ENCODE measurements at regions of chr1 and their contacts with region 1.

Region 1: DNA sequence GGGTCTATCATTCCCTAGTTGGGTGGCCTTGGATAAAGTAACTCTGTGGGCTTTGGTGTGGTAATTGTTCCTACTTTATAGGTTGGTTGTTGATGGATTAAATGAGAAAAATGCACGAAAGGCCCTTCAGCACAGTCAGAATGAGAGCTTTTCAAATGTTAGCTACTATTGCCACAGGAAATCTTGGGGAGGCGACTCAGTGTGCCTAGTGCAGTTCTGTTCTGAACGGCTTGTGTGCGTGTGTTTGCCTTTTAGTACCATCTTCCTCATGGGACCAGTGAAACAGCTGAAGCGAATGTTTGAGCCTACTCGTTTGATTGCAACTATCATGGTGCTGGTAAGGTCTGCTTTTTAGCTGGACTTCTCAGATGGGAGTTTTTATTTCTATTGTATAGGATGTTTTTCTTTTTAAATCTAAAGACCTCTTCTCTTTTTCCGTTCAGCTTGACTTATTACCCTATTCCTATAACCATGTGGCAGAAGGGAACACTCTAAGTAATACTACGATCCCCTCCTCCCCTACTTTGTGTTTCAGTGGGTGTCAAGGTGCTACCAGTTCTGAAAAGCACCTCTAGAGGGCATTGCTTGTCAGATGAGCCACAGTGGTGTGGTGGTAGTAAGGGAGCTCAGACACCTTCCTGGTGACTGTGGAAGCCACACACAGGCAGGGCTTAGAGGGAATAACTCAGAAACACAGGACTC is 9.2 kb downstream of the SFT2D2 start:
- H3K4me3 ChIP-seq: no peak overlapping the region
- H3K27ac ChIP-seq: no peak overlapping the region
- H3K4me1 ChIP-seq: no peaks in the 10 kb centered on the region
- CTCF ChIP-seq: peak; percentile 42; the same call in 1 of the 2 replicates

Region 2: GRCh38 chr1:168121401-168122011 is 113.5 kb before region 1 on chr1:
- CTCF ChIA-PET with region 1: no interaction called
- POLR2A ChIA-PET with region 1: no interaction called
- H3K4me3 ChIP-seq: no peak overlapping the region
- H3K27ac ChIP-seq: no peak overlapping the region
- H3K4me1 ChIP-seq: no peaks in the 10 kb centered on the region
- CTCF ChIP-seq: no peak

Region 3: GRCh38 chr1:168256164-168256563 is 21.2 kb after region 1 on chr1:
- CTCF ChIA-PET with region 1: interaction called, 23 read pairs
- POLR2A ChIA-PET with region 1: no interaction called
- H3K4me3 ChIP-seq: no peak overlapping the region
- H3K27ac ChIP-seq: no peak overlapping the region
- H3K4me1 ChIP-seq: no peaks in the 10 kb centered on the region
- CTCF ChIP-seq: no peak

Region 4: GRCh38 chr1:168301664-168302334 is 66.8 kb after region 1 on chr1:
- CTCF ChIA-PET with region 1: interaction called, 10 read pairs
- POLR2A ChIA-PET with region 1: no interaction called
- H3K4me3 ChIP-seq: no peak overlapping the region
- H3K27ac ChIP-seq: no peak overlapping the region
- H3K4me1 ChIP-seq: no peaks in the 10 kb centered on the region
- CTCF ChIP-seq: no peak

Region 5: DNA sequence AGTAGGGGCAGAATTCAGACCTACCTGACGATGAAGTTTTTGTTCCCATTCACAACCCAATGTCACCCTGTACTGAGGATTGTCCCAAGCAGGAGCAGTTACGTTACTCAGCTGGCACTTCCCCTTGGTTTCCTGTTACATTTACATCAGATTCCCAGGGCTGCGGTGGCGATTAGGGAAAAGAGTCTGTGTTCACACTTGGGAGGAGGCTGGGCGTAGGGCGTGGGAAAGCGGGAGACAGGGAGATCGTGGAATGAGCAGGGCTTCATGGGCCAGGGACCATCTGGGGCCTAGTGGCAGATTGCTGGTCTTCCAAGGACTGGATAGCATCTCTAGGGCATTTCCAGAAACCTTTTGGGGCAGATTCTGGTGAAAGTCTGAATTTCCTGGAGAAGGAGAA is 84.7 kb after region 1 on chr1:
- CTCF ChIA-PET with region 1: interaction called, 10 read pairs
- POLR2A ChIA-PET with region 1: no interaction called
- H3K4me3 ChIP-seq: no peak overlapping the region
- H3K27ac ChIP-seq: no peak overlapping the region
- H3K4me1 ChIP-seq: no peaks in the 10 kb centered on the region
- CTCF ChIP-seq: no peak

Region 6: GRCh38 chr1:168498159-168498631 is 263.2 kb after region 1 on chr1:
- CTCF ChIA-PET with region 1: no interaction called
- POLR2A ChIA-PET with region 1: no interaction called
- H3K4me3 ChIP-seq: no peak overlapping the region
- H3K27ac ChIP-seq: no peak overlapping the region
- H3K4me1 ChIP-seq: peaks cover 10% of the 10 kb centered on the region
- CTCF ChIP-seq: no peak